ENCODE measurements at regions of chr16 and their contacts with region 1.

Region 1: GRCh38 chr16:84055366-84055765 is 12.8 kb upstream of the SLC38A8 start:
- DNase-seq: no peak
- ATAC-seq: no peak
- H3K4me3 ChIP-seq: no peak overlapping the region
- H3K27ac ChIP-seq: no peak overlapping the region
- H3K4me1 ChIP-seq: no peaks in the 10 kb centered on the region
- CTCF ChIP-seq: no peak
- EP300 ChIP-seq: no peak
- POLR2A ChIP-seq: no peak
- RAD21 ChIP-seq: no peak

Region 2: GRCh38 chr16:84044118-84044488 is 11.3 kb before region 1 on chr16:
- CTCF ChIA-PET with region 1: interaction called, 13 read pairs
- POLR2A ChIA-PET with region 1: no interaction called
- DNase-seq: peak; percentile 42 to 53
- ATAC-seq: peak; percentile 61 to 84; a peak in 4 of 6 replicates
- H3K4me3 ChIP-seq: no peak overlapping the region
- H3K27ac ChIP-seq: no peak overlapping the region
- H3K4me1 ChIP-seq: no peaks in the 10 kb centered on the region
- CTCF ChIP-seq: peak; percentile 46; the same call in 2 of the 3 replicates
- EP300 ChIP-seq: no peak
- POLR2A ChIP-seq: no peak
- RAD21 ChIP-seq: peak; percentile 36 to 55; a peak in 4 of 5 replicates

Measured in A549 (cell line).